Body of pancreas (tissue), 4 donors: ENCODE measurements at regions of chr11 and their contacts with region 1.

Region 1: DNA sequence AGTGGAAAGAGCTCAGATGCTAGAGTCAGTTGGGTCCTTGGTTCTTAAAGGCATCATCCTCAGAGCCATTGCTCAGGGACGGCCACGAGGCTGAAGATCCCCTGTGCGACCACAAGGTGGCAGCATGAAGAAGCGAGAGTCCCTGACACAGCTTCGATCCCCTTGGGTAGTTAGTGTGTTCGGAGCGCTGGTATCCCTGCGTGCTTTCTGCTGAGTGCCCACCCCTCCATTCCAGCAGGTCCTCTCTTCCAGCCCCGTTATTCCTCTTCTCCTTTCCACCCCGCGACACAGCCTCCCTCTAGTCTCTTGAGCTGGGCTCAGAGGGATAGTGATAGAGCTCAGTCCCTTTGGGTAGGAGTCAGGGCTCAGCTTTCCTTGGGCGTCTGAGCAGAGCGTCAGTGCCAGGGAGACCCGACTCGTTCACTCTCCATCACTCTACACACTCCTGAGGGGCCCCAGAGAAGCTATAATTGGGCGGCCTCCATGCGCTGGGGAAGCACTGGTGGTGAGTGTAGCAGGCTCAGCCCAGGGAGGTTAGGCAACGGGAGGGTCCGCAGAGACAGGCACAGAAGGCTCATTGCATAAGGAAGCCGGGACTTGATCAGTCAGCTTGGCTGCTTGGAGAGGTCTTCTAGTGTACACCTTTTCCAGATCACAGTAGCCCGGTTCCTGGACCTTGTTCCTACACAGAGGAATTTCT is at the start of gene OR51D1:
- DNase-seq: peak; percentile 73 to 77 (median 75)
- ATAC-seq: peak; percentile 94
- H3K4me3 ChIP-seq: no peak within 1 kb of the TSS
- H3K27ac ChIP-seq: no peak within 1 kb of the TSS
- H3K4me1 ChIP-seq: no peaks in the 10 kb centered on the region
- H3K27me3 ChIP-seq: no peaks in the 10 kb centered on the region
- CTCF ChIP-seq: peak; percentile 66 to 89 (median 86)
- POLR2A ChIP-seq: no peak
- total RNA-seq, gene OR51D1: not detected

Region 2: DNA sequence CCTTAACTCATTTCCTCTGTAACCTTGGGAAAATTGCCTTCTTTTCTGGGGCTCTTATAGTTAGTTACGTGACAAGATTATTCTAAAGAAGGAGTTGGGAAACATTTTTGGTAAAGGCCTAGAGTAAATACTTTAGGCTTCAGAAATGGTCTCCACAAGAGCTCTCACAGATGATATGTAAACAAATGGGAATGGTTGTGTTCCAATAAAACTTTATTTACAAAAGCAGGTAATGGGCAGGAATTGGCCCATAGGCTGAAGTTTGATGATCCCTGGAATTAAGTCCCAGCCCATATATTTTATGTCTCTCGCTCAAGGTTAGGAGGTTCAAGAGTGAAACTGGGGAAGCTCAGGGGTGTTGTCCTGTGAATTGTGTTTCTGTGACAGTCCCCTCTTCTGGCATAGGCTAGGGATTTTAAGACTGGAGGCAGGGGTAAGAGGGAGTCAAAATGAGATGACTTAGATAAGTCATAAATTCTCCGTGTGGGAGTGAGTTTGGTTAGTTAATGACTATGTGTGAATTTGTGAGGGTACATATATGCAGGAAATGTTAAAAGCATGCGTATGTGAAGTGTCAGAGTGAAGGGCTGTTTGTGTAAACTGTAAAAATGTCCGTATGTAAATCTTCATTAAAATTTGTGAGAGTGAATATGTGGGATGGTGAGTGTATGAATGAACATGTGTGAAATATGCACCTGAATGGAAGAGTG is 261.5 kb before region 1 on chr11:
- intact Hi-C with region 1: no loop called
- DNase-seq: no peak
- ATAC-seq: no peak
- H3K4me3 ChIP-seq: no peak overlapping the region
- H3K27ac ChIP-seq: no peak overlapping the region
- H3K4me1 ChIP-seq: no peaks in the 10 kb centered on the region
- H3K27me3 ChIP-seq: no peaks in the 10 kb centered on the region
- CTCF ChIP-seq: no peak
- POLR2A ChIP-seq: no peak

Region 3: DNA sequence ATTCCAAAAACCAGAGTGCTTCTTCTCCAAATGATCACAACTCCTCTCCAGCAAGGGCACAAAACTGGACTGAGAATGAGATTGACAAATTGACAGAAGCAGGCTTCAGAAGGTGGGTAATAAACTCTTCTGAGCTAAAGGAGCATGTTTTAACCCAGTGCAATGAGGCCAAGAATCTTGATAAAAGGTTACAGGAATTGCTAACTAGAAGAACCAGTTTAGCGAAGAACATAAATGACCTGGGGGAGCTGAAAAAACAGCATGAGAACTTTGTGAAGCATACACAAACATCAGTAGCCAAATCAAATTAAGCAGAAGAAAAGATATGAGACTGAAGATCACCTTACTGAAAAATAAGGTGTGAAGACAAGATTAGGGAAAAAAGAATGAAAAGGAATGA is 76.6 kb before region 1 on chr11:
- intact Hi-C with region 1: no loop called
- DNase-seq: peak in 1 of 4 donors; percentile 4
- ATAC-seq: peak; percentile 79
- H3K4me3 ChIP-seq: no peak overlapping the region
- H3K27ac ChIP-seq: peak overlapping the region in 3 of 4 donors; percentile 53 to 55 (median 54)
- H3K4me1 ChIP-seq: peaks cover 28% of the 10 kb centered on the region
- H3K27me3 ChIP-seq: no peaks in the 10 kb centered on the region
- CTCF ChIP-seq: no peak
- POLR2A ChIP-seq: no peak

Region 4: DNA sequence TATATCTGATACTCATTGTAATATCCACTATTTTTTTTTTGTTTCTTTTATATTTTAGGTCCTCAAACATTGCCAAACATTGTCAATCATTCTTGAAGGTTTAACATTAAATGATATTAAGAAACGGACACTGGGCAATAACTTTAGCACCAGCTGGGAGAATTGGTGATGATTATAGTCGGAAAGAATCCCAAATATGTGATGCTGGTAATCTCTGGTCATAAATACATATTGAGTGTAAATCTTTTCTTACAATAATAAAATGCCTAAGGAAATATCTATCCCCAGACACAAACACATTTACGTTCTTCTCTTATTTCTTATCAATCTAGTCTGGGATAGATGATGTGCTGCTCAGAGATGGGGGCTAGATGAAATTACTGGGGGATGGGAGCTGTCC is 35.4 kb after region 1 on chr11:
- intact Hi-C with region 1: no loop called
- DNase-seq: no peak
- ATAC-seq: no peak
- H3K4me3 ChIP-seq: no peak overlapping the region
- H3K27ac ChIP-seq: no peak overlapping the region
- H3K4me1 ChIP-seq: no peaks in the 10 kb centered on the region
- H3K27me3 ChIP-seq: no peaks in the 10 kb centered on the region
- CTCF ChIP-seq: no peak
- POLR2A ChIP-seq: no peak

Region 5: DNA sequence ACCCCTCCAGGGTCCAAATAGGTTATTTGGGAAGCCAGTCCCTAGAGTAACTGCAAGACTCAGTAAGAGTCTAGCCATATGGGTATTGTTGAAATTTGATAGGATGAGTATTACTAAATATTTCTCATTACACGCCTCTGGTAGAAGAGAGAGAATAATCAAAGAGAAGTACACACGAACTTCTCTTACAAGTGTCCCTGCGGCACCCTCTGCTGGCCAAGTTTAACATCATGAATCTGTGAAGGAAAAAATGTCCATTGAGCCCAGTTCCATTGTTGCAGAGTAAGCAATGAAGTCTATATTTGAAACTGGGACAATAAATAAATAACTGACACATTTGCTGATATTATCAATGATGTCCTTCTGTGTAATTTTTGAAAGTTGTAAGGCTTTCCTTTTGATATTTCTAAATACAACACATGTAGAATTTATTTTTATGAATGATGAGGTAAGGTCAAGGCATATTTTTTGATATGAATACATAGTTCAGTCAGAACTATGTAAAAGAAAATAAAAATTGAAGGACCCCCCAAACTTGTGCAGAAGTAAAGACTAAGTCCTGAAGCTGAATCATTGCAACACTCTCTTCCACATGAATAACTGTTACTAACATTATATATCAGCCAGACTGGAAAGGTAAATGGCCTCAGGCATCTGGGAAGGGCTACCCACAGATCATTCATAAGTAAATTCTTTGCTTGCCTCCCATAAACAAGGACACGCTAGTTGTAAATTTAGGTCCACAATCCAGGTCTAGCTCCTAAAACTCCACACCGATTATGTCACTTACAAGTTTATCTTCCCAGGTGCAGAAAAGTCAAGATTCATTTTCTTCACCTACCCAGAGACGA is 367.5 kb after region 1 on chr11:
- intact Hi-C with region 1: loop called (anchors 5 kb)
- DNase-seq: peak; percentile 61 to 83 (median 70)
- ATAC-seq: peak; percentile 65
- H3K4me3 ChIP-seq: no peak overlapping the region
- H3K27ac ChIP-seq: no peak overlapping the region
- H3K4me1 ChIP-seq: no peaks in the 10 kb centered on the region
- H3K27me3 ChIP-seq: no peaks in the 10 kb centered on the region
- CTCF ChIP-seq: peak in 6 of 7 experiments; percentile 56 to 79 (median 63)
- POLR2A ChIP-seq: no peak